T-cell (primary cell): ENCODE measurements at regions of chr3 and their contacts with region 1.

Region 1: DNA sequence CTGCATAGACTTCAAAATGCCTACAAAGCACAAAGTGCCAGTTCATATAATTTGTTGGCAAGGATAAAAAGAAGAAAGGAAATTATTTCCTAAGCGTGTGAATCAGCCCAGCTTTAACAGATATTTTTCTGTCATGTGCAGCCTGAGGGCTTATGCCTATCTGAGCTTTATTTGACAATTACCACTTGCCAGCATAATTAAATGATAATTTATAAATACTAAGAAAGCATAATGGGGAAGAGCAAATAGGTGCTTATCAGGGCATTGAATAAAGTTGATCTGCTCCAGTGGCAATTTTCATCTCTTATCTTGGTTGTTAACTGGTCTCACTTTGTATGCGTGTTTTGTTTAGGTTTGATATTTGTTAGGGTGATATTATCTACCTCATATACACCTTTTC is 313.4 kb upstream of the DNAJC19 start:
- DNase-seq: no peak
- ATAC-seq: no peak
- H3K4me3 ChIP-seq: no peak overlapping the region
- H3K4me3 Mint-ChIP-seq: no peak overlapping the region
- H3K27ac ChIP-seq: no peak overlapping the region
- H3K27ac Mint-ChIP-seq: no peak overlapping the region
- H3K4me1 ChIP-seq: no peaks in the 10 kb centered on the region
- H3K4me1 Mint-ChIP-seq: no peaks in the 10 kb centered on the region
- H3K27me3 ChIP-seq: peaks cover 0 to 2% of the 10 kb centered on the region in 2 experiments
- H3K27me3 Mint-ChIP-seq: peaks cover 7 to 9% of the 10 kb centered on the region in 2 donors

Region 2: DNA sequence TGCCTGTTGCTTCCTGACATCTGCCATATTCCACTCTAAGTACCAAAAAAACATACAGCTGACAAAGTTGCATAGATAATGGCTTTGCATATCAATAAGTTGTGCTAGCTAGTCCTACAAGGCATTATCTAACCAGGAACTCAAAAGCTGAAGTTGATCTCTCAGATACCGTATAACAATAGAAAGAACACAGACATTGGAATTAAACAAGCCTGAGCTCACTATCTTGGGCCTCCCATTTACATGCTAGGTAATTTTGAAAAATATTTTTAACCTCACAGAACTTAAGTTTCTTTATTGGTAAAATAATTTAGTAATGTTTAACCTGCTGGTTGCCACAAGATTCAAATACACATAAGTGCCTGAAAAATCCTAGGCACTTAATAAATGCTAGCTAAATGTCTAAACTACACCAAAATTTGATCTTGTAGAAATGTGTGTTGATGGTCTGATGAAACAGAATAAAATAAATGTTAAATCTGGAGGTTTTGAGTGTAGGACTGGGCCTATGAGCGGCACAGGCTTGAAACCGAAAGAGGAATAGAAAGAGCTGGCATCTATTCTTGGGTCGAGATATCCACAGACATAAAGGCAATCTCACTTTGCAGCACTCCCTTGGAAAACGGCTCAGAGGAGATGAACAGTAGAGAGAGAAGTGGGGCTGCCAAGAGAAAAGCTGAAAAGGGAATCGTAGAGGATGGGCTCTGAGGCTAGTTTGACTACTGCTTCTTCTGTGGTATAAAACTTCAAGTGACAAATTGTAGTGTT is 730.9 kb before region 1 on chr3:
- CTCF ChIA-PET with region 1: no interaction called
- POLR2A ChIA-PET with region 1: interaction called in 1 of 2 experiments, 13 read pairs
- DNase-seq: no peak
- ATAC-seq: no peak
- H3K4me3 ChIP-seq: no peak overlapping the region
- H3K4me3 Mint-ChIP-seq: no peak overlapping the region
- H3K27ac ChIP-seq: no peak overlapping the region
- H3K27ac Mint-ChIP-seq: no peak overlapping the region
- H3K4me1 ChIP-seq: no peaks in the 10 kb centered on the region
- H3K4me1 Mint-ChIP-seq: no peaks in the 10 kb centered on the region
- H3K27me3 ChIP-seq: peaks cover 0 to 2% of the 10 kb centered on the region in 2 experiments
- H3K27me3 Mint-ChIP-seq: peaks cover 10 to 14% of the 10 kb centered on the region in 2 donors

Region 3: DNA sequence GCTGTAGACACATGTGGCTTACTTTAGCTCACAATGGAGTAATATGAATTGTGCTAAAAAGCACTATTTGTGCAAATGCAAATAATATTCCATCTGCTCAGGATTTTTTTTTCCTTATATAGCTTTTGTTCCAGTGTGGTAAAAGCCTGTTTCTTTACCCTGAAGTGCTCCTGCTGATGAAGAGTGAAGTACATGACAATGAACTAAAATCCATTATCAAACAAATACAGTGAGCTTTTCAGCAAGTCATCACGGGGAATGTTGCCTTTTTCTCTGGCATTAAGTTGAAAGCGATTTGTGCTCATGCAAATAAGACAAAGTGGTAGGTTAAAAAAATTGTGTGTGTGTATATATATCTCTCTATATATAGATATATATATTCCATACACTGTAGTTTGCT is 595.1 kb before region 1 on chr3:
- CTCF ChIA-PET with region 1: no interaction called
- POLR2A ChIA-PET with region 1: no interaction called
- DNase-seq: no peak
- ATAC-seq: no peak
- H3K4me3 ChIP-seq: no peak overlapping the region
- H3K4me3 Mint-ChIP-seq: no peak overlapping the region
- H3K27ac ChIP-seq: no peak overlapping the region
- H3K27ac Mint-ChIP-seq: no peak overlapping the region
- H3K4me1 ChIP-seq: no peaks in the 10 kb centered on the region
- H3K4me1 Mint-ChIP-seq: no peaks in the 10 kb centered on the region
- H3K27me3 ChIP-seq: no peaks in the 10 kb centered on the region
- H3K27me3 Mint-ChIP-seq: peaks cover 0 to 15% of the 10 kb centered on the region in 2 donors

Region 4: DNA sequence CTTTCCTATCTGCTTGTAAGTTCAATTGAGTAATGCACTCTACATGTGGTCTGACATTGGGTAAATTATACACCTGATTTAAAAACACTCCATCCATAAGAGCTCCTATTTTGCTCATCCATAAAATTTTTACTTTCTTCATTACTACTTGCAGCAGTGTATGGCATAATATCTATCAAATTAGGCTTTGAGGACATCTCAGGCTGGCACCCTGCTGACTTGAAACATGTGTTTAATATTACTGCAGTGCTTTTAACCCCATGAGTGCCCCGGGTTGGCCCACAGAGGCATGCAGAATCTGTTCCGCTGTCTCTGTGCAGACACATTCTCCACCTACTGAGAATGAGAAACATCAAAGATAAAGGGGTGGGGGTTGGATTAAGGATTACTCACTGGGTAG is 63.5 kb before region 1 on chr3:
- CTCF ChIA-PET with region 1: no interaction called
- POLR2A ChIA-PET with region 1: no interaction called
- DNase-seq: no peak
- ATAC-seq: no peak
- H3K4me3 ChIP-seq: no peak overlapping the region
- H3K4me3 Mint-ChIP-seq: no peak overlapping the region
- H3K27ac ChIP-seq: no peak overlapping the region
- H3K27ac Mint-ChIP-seq: no peak overlapping the region
- H3K4me1 ChIP-seq: no peaks in the 10 kb centered on the region
- H3K4me1 Mint-ChIP-seq: no peaks in the 10 kb centered on the region
- H3K27me3 ChIP-seq: no peaks in the 10 kb centered on the region
- H3K27me3 Mint-ChIP-seq: peaks cover 0 to 3% of the 10 kb centered on the region in 2 donors

Region 5: DNA sequence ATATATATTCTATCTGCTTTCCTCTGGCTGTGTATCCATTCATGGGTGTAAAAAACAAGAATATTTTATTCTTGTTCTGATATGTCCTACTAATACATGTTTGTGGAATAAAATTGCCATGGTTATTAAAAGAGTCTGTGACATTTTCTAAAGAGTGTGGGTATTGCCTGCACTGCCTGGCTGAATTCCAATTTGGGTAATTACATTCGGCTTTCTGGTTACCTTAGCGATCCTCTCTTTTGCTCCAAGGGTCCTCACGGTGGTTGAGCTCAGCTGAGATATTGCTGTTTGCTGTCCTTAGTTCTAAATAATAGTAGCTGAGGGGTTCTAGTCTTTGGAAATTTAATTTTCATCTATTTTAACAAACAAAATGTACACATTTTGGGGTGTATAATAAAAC is 12.0 kb before region 1 on chr3:
- CTCF ChIA-PET with region 1: no interaction called
- POLR2A ChIA-PET with region 1: no interaction called
- DNase-seq: no peak
- ATAC-seq: no peak
- H3K4me3 ChIP-seq: no peak overlapping the region
- H3K4me3 Mint-ChIP-seq: no peak overlapping the region
- H3K27ac ChIP-seq: no peak overlapping the region
- H3K27ac Mint-ChIP-seq: no peak overlapping the region
- H3K4me1 ChIP-seq: no peaks in the 10 kb centered on the region
- H3K4me1 Mint-ChIP-seq: no peaks in the 10 kb centered on the region
- H3K27me3 ChIP-seq: no peaks in the 10 kb centered on the region
- H3K27me3 Mint-ChIP-seq: no peaks in the 10 kb centered on the region